Head of caudate nucleus (tissue), 42 donors: ENCODE measurements at regions of chr2 and their contacts with region 1.

Region 1: DNA sequence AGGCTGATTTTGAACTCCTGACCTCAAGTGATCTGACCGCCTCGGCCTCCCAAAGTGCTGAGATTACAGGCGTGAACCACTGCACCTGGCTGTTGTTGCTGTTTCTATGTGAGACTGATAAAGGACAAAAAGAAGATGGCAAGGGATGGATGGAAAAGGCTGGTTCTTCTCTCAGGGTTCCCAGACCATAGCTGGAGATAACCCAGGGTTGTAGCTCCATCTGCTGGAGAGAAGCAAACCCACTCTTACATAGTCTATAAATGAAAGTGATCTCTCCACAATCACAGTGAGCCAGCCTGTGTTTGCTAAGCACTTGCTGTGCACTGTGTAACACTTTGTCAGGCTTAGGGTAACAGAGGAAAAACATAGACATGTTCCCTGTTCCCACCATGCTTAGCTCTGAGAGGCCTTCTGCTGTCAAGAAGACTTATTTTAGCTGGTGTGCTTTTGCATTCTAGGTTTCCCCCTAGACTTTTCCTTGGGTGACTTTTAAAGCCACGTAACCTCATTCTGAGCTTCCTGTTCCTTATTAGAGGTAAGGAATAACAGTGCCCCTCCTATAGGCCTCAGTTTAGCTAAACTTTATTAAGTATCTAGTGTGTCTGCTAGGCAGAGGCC is 49.7 kb downstream of the LIMS1 start:
- DNase-seq: peak in 38 of 42 donors; percentile 28 to 89 (median 74)

Region 2: DNA sequence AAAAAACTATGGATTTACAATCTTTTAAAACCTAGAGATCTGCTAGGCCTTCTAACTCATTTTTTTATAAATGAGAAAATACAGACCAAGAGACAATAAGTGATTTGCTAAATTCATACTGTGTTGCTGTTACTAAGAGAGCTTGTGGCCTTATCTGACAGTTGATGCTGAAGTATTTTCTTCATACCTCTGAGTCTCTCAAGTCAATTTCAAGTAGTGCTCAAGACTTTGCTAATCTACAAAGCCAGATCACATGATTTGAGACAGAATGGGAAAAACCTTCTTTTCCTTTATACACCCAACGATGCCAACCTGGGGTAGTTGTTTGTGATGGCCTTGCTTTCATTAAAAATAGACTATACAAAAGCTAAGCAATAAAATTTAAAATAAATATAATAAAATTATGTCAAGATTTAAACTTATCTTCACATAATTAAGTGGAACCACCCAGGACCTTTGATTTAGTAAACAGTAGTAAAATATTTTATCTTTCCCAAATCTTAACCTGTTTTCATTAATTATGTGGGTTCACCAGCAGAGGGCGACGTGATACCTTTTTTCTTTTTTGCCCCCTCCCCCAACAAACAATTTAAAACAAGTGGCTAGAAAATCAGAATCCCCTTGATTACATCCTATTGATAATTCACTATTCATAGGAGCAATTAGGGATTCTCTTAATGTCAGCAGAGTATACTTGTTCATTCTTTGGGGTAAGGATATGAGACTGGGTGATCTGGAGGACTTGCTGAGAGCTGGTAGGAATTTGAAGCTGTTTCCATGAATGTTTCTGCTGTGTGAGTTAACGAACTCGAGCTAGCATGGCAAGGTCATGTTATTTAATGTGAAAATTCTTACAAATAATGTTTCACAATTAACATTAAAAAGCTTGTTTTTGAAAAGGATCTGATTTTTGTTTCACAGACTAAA is 647.3 kb before region 1 on chr2:
- intact Hi-C with region 1: loop called (anchors 10 kb)
- DNase-seq: peak in 25 of 42 donors; percentile 5 to 71 (median 24)

Region 3: DNA sequence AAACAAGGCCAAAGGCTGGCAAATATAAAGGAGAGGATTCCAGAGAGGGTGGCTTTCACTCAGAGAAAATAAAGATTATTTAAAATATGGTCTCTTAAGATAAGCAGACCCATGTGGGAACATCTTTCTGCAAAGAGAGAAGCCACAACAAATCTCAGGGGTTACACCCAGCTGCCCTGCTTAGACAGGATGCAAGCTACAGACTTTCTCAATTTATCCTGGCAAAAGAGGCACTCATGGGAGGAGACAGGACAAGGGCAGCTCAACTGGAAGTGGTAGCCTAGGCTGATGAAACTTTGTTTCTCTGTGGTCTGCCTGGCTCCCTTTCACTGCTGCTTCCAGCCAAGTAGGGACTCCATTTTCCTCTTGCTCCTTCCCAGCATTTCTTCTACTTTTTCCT is 232.1 kb before region 1 on chr2:
- intact Hi-C with region 1: loop called (anchors 5 kb)
- DNase-seq: no peak

Region 4: DNA sequence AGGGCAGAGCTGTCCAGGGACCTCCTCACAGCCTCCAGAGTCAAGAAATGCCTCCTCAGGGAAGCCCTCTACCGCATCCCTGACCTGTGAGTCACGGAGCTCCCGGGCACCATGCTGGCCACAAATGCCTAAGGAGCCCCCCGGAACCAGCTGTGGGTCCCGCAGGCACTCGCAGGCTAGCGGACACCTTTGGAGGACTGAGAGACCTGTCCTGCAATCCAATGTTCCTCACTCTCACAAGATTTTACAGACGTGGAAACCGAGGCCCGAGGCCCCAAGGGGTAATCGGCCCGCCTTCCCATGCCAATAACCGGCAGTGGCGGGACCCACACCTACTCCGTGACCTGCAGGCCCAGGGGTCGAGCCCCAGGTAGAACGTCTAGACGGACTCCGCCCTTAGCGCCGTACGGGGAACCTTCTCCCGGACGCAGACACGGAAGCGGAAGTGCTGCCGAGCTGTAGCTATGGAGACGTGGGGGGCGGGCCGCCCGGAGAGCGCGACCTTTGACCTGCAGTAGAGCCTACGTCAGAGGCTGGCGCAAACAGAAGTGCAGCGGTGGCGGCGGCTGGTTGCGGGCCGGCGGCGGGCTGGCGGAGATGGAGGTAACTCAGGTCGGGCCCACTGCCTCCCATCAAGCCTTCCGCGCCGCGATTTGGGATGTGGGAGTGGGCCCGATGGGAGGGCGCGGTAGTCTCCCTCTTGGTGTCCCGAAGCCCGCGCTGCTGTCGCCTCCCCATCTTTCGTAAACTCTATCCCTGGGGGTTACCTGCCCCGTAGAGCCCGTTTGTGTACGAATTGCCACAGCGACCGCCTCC is 135.1 kb before region 1 on chr2 and contains the start of gene GCC2:
- intact Hi-C with region 1: loop called (anchors 10 kb)
- DNase-seq: peak; percentile 92 to 98 (median 96)